ENCODE measurements at regions of chr6 and their contacts with region 1.

Region 1: GRCh38 chr6:46925563-46926253 is 4.0 kb upstream of the ADGRF5 start:
- DNase-seq: peak; percentile 71 to 98
- H3K4me3 ChIP-seq: peak overlapping the region; percentile 9; the same call in 1 of the 2 replicates
- H3K27ac ChIP-seq: peak overlapping the region; percentile 95
- H3K4me1 ChIP-seq: peaks cover 66% of the 10 kb centered on the region
- H3K27me3 ChIP-seq: no peaks in the 10 kb centered on the region
- CTCF ChIP-seq: no peak

Region 2: GRCh38 chr6:47042275-47042791 is 116.6 kb after region 1 on chr6 and contains the start of gene ADGRF1:
- CTCF ChIA-PET with region 1: interaction called, 4 read pairs
- POLR2A ChIA-PET with region 1: interaction called, 5 read pairs
- intact Hi-C with region 1: loop called (anchors 2 kb)
- DNase-seq: peak; percentile 72 to 93
- H3K4me3 ChIP-seq: peak within 1 kb of the TSS; percentile 86
- H3K27ac ChIP-seq: peak within 1 kb of the TSS; percentile 98
- H3K4me1 ChIP-seq: peaks cover 68% of the 10 kb centered on the region
- H3K27me3 ChIP-seq: no peaks in the 10 kb centered on the region
- CTCF ChIP-seq: no peak
- total RNA-seq, gene ADGRF1: 112 and 162 TPM in 2 replicates